ENCODE measurements at regions of chr11 and their contacts with region 1.

Region 1: GRCh38 chr11:86041975-86042378 is 26.9 kb downstream of the PICALM start:
- DNase-seq: peak; percentile 48
- H3K4me3 Mint-ChIP-seq: peak overlapping the region; percentile 43
- H3K27ac Mint-ChIP-seq: peak overlapping the region; percentile 71
- H3K4me1 Mint-ChIP-seq: peaks cover 63% of the 10 kb centered on the region
- H3K27me3 Mint-ChIP-seq: no peaks in the 10 kb centered on the region

Region 2: GRCh38 chr11:86021377-86021776 is 20.6 kb before region 1 on chr11:
- intact Hi-C with region 1: loop called (anchors 2 kb)
- DNase-seq: no peak
- H3K4me3 Mint-ChIP-seq: no peak overlapping the region
- H3K27ac Mint-ChIP-seq: peak overlapping the region; percentile 75
- H3K4me1 Mint-ChIP-seq: peaks cover 56% of the 10 kb centered on the region
- H3K27me3 Mint-ChIP-seq: no peaks in the 10 kb centered on the region

Region 3: DNA sequence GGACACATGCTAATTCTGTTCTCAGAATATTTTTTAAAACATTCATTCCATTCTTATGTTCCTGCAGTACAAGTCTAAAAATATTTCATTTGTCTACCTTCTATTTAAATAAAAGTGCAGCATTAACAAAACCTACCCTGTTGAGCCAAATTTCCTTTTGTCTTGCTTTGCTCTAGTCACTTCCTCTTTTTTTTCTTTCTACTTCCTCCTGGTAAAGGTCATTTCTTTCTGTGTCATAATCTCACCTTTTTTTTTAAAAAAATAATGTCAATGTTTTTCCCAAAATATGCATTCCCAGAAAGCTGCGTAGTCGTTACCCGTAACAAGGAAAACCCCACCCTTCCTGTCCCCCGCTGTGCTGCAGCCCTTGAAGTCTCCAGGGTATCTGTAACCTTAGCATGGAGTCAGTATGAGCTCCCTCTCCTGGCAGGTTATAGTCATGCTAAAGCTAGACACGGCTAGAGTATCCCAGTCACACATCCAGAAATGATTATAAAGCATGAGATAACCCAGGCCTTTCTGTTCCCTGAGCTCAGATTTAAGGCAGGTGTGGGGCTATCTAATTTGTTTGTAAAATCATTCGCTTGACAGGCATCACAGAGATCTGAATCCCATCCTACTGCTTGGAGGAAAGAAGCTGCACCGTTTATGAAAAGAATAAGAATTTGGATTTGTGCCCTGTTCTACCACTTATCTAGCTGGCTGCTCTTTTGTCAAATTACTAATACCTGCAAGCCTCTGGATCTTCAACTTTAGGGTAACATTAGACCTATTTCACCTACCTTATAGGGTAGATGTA is 151.5 kb after region 1 on chr11:
- intact Hi-C with region 1: loop called (anchors 1 kb)
- DNase-seq: peak; percentile 58
- H3K4me3 Mint-ChIP-seq: peak overlapping the region; percentile 58
- H3K27ac Mint-ChIP-seq: peak overlapping the region; percentile 54
- H3K4me1 Mint-ChIP-seq: peaks cover 43% of the 10 kb centered on the region
- H3K27me3 Mint-ChIP-seq: no peaks in the 10 kb centered on the region

Region 4: DNA sequence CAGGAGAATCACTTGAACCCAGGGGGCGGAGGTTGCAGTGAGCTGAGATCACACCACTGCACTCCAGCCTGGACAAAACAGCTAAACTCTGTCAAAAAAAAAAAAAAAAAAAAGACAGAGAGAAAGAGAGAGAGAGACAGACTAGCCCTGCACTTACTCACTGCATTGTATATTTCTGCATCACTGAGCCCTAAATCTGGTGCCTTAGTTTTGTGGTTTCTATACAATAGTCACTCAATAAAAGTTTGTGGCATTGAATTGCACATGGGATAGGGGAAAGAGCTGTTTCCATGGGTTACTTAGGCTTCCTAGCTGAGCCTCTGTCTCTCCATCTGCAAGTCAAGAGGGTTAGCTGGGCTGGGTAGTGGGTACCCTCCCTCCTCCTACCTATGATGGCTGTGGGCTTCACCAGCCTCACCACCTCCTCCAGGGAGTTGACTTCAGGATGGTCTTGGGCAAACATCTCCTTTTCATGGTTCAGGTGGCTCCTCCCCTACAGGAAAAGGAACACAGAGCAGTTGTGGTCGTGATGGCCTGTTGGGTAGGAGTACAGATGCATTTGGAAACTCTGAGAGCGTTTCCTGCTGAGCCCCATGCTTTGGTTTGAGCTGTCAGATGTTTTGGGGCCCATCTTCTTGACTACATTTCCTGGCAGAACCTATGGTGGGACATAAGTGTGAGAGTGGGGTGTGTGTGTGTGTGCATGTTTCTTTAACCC is 405.9 kb after region 1 on chr11:
- intact Hi-C with region 1: loop called (anchors 5 kb)
- DNase-seq: peak; percentile 31
- H3K4me3 Mint-ChIP-seq: peak overlapping the region; percentile 48
- H3K27ac Mint-ChIP-seq: no peak overlapping the region
- H3K4me1 Mint-ChIP-seq: peaks cover 43% of the 10 kb centered on the region
- H3K27me3 Mint-ChIP-seq: no peaks in the 10 kb centered on the region

Region 5: DNA sequence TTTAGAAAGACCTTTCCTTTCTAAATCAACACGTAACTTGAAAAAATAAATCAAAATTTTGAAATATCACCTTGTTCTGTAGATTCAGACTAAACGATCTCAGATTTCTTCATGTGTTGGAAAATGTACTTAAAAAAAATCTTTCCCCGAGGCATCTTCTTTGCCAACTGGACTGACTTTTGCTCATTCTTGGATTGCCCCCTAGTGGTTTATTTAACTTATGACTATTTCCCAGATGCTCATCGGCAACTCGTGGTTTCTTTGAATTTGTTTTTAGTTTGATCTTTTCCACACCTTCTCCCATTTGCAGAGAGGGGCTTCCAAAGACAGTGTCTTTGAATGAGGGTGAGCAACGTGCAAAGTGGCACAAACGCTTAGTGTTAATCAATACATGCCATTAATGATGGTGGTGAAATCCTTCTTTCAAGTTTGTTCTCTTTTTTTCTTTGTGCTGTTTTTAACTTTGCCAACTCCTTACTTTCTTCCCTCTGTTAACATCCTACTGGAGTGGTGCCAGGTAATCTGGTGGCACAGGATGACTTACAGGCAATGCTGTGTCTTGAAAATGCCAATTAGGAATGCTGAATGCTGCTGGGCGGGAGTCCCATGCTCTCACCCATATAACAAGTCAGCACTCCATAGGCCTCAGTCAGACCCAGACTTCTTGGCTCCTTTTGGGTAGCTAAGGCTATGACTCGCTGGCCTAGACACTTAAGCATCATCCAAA is 776.7 kb after region 1 on chr11:
- intact Hi-C with region 1: loop called (anchors 5 kb)
- DNase-seq: no peak
- H3K4me3 Mint-ChIP-seq: no peak overlapping the region
- H3K27ac Mint-ChIP-seq: no peak overlapping the region
- H3K4me1 Mint-ChIP-seq: peaks cover 31% of the 10 kb centered on the region
- H3K27me3 Mint-ChIP-seq: peaks cover 24% of the 10 kb centered on the region

Measured in activated T-helper 1 cell treated with anti-CD3 and anti-CD28 coated beads, Interleukin-12 subunit alpha, Interleukin-12 subunit beta, Interleukin-2, Interleukin-4 antibody, amounts not matched to agents 30 ng/mL and 10 ng/mL and 1 ng/mL, durations not matched to agents 14 hours and 24 hours and 36 hours (primary cell).